Caco-2 (cell line): ENCODE measurements at regions of chr15 and their contacts with region 1.

Region 1: GRCh38 chr15:51874751-51875528 is 45.5 kb downstream of the TMOD3 start:
- DNase-seq: peak; percentile 45 to 51
- H3K4me3 ChIP-seq: no peak overlapping the region
- H3K4me3 Mint-ChIP-seq: peak overlapping the region; percentile 40
- H3K27ac Mint-ChIP-seq: peak overlapping the region; percentile 59
- H3K4me1 ChIP-seq: peaks cover 37% of the 10 kb centered on the region
- H3K4me1 Mint-ChIP-seq: peaks cover 27% of the 10 kb centered on the region
- H3K27me3 ChIP-seq: no peaks in the 10 kb centered on the region
- H3K27me3 Mint-ChIP-seq: no peaks in the 10 kb centered on the region
- CTCF ChIP-seq: no peak

Region 2: DNA sequence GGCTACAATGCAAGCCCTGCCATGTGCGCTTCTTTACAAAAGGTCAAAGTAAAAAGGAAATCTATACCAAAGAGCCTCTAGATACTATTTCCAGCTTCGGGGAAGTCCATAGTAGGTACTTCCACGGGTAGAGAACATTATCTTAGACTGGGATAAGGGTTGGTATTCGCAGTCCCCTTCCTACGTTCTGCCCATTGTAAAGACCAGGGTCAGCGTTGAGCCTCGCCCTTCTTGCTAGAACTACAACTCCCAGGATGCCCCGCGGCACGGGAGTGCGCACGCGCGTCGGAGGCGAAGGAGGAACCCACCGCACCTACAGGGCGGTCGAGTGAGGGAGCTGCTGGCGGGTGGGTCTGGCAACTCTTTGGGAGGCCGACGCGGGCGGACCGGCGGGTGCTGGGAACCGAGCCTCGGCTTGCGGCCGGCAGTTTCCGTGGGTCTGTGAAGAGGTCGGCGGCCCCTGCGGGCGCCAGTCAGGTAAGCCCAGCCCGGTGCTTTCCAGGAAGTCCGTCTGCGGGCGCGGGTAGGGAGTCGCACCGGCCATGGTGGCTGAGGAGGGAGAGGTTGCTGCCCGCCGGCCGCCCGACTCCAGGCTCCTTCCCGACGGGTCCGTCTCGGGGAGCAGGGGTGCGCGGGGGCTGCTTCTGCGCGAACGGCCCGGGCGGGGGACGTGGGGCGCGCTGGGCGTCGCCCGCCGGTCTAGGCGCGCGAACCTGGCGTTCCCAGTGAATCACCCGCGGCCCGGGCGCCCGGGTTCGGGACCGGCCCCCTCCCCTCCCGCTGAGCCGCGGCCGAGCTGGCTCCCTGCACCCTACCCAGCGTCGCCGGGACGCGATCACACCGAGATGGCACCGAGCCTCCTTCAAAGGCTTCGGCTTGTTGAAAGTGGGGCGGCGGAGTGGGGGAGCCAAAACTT is 45.3 kb before region 1 on chr15 and contains the start of gene TMOD3:
- CTCF ChIA-PET with region 1: no interaction called
- POLR2A ChIA-PET with region 1: no interaction called
- intact Hi-C with region 1: loop called (anchors 2 kb)
- DNase-seq: peak; percentile 94 to 95
- H3K4me3 ChIP-seq: peak within 1 kb of the TSS; percentile 82
- H3K4me3 Mint-ChIP-seq: peak within 1 kb of the TSS; percentile 89
- H3K27ac Mint-ChIP-seq: peak within 1 kb of the TSS; percentile 79
- H3K4me1 ChIP-seq: peaks cover 7% of the 10 kb centered on the region; the same call in 1 of the 2 replicates
- H3K4me1 Mint-ChIP-seq: peaks cover 12% of the 10 kb centered on the region
- H3K27me3 ChIP-seq: no peaks in the 10 kb centered on the region
- H3K27me3 Mint-ChIP-seq: no peaks in the 10 kb centered on the region
- CTCF ChIP-seq: no peak
- total RNA-seq, gene TMOD3: 46.8 and 54.4 TPM in 2 replicates

Region 3: GRCh38 chr15:52021128-52021671 is 146.3 kb after region 1 on chr15:
- CTCF ChIA-PET with region 1: no interaction called
- POLR2A ChIA-PET with region 1: no interaction called
- intact Hi-C with region 1: no loop called
- DNase-seq: peak in 1 of 2 experiments; percentile 9
- H3K4me3 ChIP-seq: peak overlapping the region; percentile 69
- H3K4me3 Mint-ChIP-seq: peak overlapping the region; percentile 93
- H3K27ac Mint-ChIP-seq: peak overlapping the region; percentile 96
- H3K4me1 ChIP-seq: peaks cover 12% of the 10 kb centered on the region; the same call in 1 of the 2 replicates
- H3K4me1 Mint-ChIP-seq: peaks cover 16% of the 10 kb centered on the region
- H3K27me3 ChIP-seq: no peaks in the 10 kb centered on the region
- H3K27me3 Mint-ChIP-seq: no peaks in the 10 kb centered on the region
- CTCF ChIP-seq: no peak